Stomach (tissue), 19 donors: ENCODE measurements at regions of chr16 and their contacts with region 1.

Region 1: DNA sequence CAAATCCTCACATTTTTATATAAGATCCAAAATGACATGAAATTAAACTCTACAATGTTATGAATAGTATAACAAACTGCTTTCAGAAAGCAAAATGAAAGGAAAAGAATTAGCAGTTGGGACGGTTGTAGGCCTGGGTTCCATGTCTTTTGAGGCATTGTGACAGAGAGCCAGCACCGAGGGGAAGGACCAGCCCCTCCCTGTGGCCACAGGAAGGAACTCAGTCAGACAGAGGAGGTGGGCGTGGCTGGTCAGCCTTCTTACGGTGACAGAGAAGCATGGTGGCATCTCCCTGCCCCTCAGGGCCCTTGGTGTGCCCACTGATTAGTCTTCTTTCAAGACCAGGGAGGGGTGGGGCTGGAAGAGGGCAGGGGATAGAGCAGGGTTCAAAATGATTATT is 5.7 kb downstream of the ZNF319 start:
- DNase-seq: peak; percentile 59 to 71
- H3K4me3 ChIP-seq: no peak overlapping the region
- H3K27ac ChIP-seq: no peak overlapping the region
- H3K4me1 ChIP-seq: peaks cover 14 to 46% (median 27%) of the 10 kb centered on the region in 4 donors
- H3K27me3 ChIP-seq: no peaks in the 10 kb centered on the region
- CTCF ChIP-seq: peak in 2 of 7 experiments; percentile 9 to 21
- EP300 ChIP-seq: no peak
- POLR2A ChIP-seq: no peak

Region 2: DNA sequence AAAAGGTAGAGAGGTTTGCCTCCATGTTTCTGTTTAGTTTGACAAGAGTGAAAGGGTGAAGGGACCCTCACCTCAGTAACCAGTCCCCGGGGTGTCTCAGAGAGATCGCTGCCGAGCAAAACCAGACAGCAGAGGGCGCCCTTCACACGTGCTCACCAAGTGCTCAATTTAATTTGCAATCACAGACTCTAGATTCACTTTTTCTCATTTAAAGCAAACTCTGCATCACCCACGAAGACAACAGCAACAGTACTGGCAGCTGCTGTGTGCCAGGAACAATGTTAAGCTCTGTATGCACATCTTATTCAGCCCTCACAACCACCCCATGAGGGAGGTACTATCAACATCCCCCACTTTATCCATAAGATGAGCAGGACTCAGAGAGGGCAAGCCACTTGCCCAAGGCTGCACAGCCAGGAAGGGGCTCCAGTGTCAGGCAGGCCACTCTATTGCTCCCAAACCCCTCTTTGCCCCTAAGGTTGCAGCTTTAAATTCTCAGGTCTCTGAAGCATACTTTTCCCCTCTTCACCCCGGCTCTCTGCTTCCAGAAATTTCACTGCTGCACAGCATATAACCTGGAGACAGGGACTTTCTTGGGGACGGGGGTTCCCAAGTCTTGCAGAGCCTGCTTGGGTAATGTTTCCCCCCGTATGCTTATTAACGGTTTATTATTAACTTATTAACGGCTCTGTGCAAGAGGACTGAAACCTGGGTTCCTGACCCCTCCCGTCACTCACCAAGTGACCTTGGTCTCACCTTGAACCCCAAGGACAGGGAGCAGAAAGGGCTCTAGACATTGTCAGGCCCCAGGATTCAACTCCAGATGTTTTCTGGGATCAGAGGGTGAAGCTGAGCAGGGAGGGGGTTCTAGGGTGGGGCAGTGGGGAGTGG is 94.8 kb before region 1 on chr16:
- intact Hi-C with region 1: loop called (anchors 5 kb)
- DNase-seq: peak; percentile 81 to 90
- H3K4me3 ChIP-seq: no peak overlapping the region
- H3K27ac ChIP-seq: no peak overlapping the region
- H3K4me1 ChIP-seq: peaks cover 0 to 10% (median 4%) of the 10 kb centered on the region in 4 donors
- H3K27me3 ChIP-seq: peaks cover 0 to 46% (median 0%) of the 10 kb centered on the region in 3 donors
- CTCF ChIP-seq: peak in 5 of 7 experiments; percentile 52 to 90 (median 75)
- EP300 ChIP-seq: no peak
- POLR2A ChIP-seq: no peak